Activated naive CD4-positive, alpha-beta T cell treated with anti-CD3 and anti-CD28 coated beads, Interleukin-2, amount 10 ng/mL, durations not matched to agents 7 days and 5 days (primary cell): ENCODE measurements at regions of chr11 and their contacts with region 1.

Region 1: GRCh38 chr11:129695575-129696308 is 119.9 kb upstream of the TMEM45B start:
- DNase-seq: peak; percentile 72
- H3K4me3 Mint-ChIP-seq: peak overlapping the region; percentile 64
- H3K27ac Mint-ChIP-seq: no peak overlapping the region
- H3K4me1 Mint-ChIP-seq: peaks cover 8% of the 10 kb centered on the region
- H3K27me3 Mint-ChIP-seq: peaks cover 9% of the 10 kb centered on the region

Region 2: GRCh38 chr11:129375751-129376657 is 319.7 kb before region 1 on chr11 and contains the start of gene BARX2:
- CTCF ChIA-PET with region 1: interaction called, 23 read pairs
- DNase-seq: peak; percentile 48
- H3K4me3 Mint-ChIP-seq: peak within 1 kb of the TSS; percentile 59
- H3K27ac Mint-ChIP-seq: no peak within 1 kb of the TSS
- H3K4me1 Mint-ChIP-seq: peaks cover 29% of the 10 kb centered on the region
- H3K27me3 Mint-ChIP-seq: peaks cover 75% of the 10 kb centered on the region

Region 3: GRCh38 chr11:129766898-129767604 is 71.3 kb after region 1 on chr11:
- CTCF ChIA-PET with region 1: no interaction called
- DNase-seq: peak; percentile 57
- H3K4me3 Mint-ChIP-seq: no peak overlapping the region
- H3K27ac Mint-ChIP-seq: no peak overlapping the region
- H3K4me1 Mint-ChIP-seq: peaks cover 6% of the 10 kb centered on the region
- H3K27me3 Mint-ChIP-seq: peaks cover 11% of the 10 kb centered on the region

Region 4: GRCh38 chr11:129871914-129872313 is 176.2 kb after region 1 on chr11:
- CTCF ChIA-PET with region 1: no interaction called
- DNase-seq: no peak
- H3K4me3 Mint-ChIP-seq: no peak overlapping the region
- H3K27ac Mint-ChIP-seq: no peak overlapping the region
- H3K4me1 Mint-ChIP-seq: peaks cover 4% of the 10 kb centered on the region
- H3K27me3 Mint-ChIP-seq: no peaks in the 10 kb centered on the region